ENCODE measurements at regions of chr19 and their contacts with region 1.

Region 1: DNA sequence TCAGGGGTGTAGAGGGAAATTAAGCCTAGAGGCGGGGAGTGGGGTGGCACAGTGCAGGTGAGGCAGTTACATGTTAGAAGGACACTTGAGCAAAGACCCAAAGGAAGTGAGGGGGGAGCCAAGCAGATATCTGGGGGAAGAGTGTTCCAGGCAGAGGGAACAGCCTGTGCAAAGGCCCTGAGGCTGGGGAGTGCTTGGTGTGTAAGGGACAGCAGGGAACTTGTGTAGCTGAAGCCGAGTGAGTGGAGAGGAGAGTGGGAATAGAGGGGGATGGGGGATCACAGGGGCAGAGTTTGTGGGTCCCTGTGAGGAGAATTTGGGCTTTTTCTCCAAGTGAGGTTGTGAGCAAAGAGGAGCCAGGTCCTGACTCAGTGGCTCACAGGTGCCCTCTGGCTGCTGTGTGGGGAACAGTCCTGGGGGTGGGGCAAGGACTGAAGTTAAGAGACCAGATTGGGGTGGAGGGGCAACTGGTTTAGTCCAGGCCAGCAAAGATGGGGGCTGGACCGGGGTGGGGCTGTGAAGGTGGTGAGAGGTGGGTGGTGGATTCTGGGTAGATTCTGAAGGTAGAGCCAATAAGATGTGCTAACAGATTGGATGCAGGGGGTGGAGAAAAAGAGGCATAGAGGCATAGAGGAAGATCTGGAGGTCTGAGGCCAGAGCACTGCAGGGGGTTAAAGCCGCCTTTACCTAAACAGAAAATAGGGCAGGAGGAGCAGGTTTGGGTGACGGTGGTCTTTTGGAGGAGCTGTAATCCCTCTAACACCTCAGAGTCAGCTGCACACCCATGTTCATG is 75.3 kb downstream of the CACNA1A start:
- DNase-seq: no peak
- H3K4me3 ChIP-seq: no peak overlapping the region
- CTCF ChIP-seq: peak; percentile 88

Region 2: GRCh38 chr19:13396250-13397080 is 34.5 kb before region 1 on chr19:
- CTCF ChIA-PET with region 1: interaction called, 27 read pairs
- POLR2A ChIA-PET with region 1: no interaction called
- DNase-seq: no peak
- H3K4me3 ChIP-seq: no peak overlapping the region
- CTCF ChIP-seq: no peak

Region 3: GRCh38 chr19:13417054-13417453 is 13.9 kb before region 1 on chr19:
- CTCF ChIA-PET with region 1: interaction called, 22 read pairs
- POLR2A ChIA-PET with region 1: no interaction called
- DNase-seq: no peak
- H3K4me3 ChIP-seq: no peak overlapping the region
- CTCF ChIP-seq: no peak

Region 4: GRCh38 chr19:13492128-13492527 is 61.1 kb after region 1 on chr19:
- CTCF ChIA-PET with region 1: no interaction called
- POLR2A ChIA-PET with region 1: no interaction called
- DNase-seq: peak; percentile 88
- H3K4me3 ChIP-seq: no peak overlapping the region
- CTCF ChIP-seq: no peak